ENCODE measurements at regions of chr4 and their contacts with region 1.

Region 1: GRCh38 chr4:99563310-99564186 is at the start of gene TRMT10A:
- DNase-seq: peak; percentile 87 to 93
- H3K4me3 ChIP-seq: peak within 1 kb of the TSS; percentile 69
- H3K27ac ChIP-seq: peak within 1 kb of the TSS; percentile 92
- H3K4me1 ChIP-seq: 0 out of 2 replicates have a peak, but pooled peaks cover 9% of the 10 kb centered on the region
- H3K27me3 ChIP-seq: no peaks in the 10 kb centered on the region
- CTCF ChIP-seq: no peak
- total RNA-seq, gene TRMT10A: 4.6 and 6.1 TPM in 2 replicates

Region 2: DNA sequence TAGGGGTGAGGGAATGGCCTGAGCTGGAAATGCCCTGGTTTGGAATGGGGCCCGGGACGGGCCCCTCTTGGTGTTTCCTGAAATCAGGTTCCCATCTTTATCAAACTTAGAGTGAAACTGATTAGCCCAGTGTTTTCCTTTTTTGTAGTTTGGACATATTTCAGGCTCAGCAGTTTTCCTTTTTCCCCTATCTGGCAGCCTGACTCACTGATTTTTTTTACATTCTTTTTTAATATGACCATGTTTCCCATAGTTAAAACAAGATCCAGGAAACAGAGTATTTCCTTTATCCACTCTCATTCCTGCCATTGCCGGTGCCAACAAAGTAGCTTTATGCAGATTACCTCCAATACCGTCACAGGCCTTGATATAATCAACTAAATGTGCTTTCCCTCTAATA is 73.3 kb before region 1 on chr4:
- CTCF ChIA-PET with region 1: no interaction called
- POLR2A ChIA-PET with region 1: no interaction called
- intact Hi-C with region 1: no loop called
- DNase-seq: no peak
- H3K4me3 ChIP-seq: no peak overlapping the region
- H3K27ac ChIP-seq: no peak overlapping the region
- H3K4me1 ChIP-seq: 0 out of 2 replicates have a peak, but pooled peaks cover 7% of the 10 kb centered on the region
- H3K27me3 ChIP-seq: no peaks in the 10 kb centered on the region
- CTCF ChIP-seq: no peak

Region 3: DNA sequence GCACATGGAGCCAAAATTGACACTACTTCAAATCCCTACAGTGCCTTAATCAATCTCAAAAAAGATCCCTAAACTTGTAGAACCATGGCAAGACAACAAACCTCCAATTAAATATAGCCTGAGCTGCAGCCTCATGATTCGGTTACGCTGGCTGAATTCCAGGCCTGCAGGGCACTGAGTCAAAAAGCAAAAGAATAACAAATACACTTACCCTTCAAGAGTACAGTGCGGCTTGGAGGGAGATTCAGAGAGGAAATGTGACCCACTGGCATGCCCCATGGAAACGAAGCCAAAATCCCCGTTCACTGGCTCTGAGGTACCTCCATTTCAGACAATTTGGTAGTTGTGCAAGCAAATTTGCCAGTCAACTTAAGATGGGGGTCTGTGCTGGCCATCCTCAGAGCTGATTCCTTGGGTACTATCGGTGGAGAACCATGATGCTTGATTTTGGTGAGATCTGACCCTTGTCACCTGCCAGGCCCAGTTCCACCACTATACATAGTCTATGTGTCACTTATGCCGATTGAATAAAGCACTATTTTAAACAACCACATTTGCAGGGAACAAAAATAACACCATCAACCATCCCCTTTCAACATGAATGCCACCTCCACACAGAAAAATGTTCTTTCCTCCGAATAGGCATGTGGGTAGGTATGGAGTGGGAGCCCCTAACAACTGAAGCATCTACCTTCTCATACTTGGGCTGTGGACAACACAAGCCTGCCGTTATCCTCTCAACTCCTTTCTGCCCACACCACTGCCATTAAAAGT is 91.9 kb after region 1 on chr4:
- CTCF ChIA-PET with region 1: no interaction called
- POLR2A ChIA-PET with region 1: no interaction called
- intact Hi-C with region 1: loop called (anchors 2 kb)
- DNase-seq: peak; percentile 64 to 77
- H3K4me3 ChIP-seq: no peak overlapping the region
- H3K27ac ChIP-seq: peak overlapping the region; percentile 38
- H3K4me1 ChIP-seq: peaks cover 42% of the 10 kb centered on the region
- H3K27me3 ChIP-seq: no peaks in the 10 kb centered on the region
- CTCF ChIP-seq: no peak

Region 4: DNA sequence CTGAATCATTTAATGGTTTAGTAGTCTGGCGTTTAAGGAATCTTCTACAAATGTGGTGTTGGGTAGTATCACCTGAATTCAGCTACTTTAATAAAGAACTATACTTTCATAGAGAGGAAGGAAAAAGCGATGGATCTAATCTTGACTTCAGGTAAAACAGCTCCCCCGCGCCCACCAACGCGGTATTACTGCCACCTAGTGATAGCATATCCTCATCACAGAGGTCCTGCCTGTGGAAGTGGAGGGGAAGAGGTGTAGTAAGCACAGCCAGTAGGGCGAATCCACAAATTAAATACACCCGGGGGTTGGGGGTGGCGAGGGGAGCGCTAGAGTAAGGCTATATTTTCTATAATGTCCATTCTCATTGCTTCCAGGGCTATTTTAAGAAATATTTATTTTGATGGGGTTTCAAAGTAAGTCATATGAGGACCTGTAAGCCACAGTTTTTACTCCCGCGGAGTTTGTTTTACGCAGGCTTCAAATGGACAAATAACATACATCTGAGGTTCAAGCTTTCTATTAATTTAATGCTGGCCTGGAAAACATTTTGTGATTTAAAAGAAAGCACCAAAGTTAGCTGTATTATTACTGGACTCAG is 244.8 kb after region 1 on chr4:
- CTCF ChIA-PET with region 1: interaction called, 4 read pairs
- POLR2A ChIA-PET with region 1: no interaction called
- intact Hi-C with region 1: loop called (anchors 1 kb)
- DNase-seq: peak; percentile 44 to 62
- H3K4me3 ChIP-seq: no peak overlapping the region
- H3K27ac ChIP-seq: no peak overlapping the region
- H3K4me1 ChIP-seq: no peaks in the 10 kb centered on the region
- H3K27me3 ChIP-seq: no peaks in the 10 kb centered on the region
- CTCF ChIP-seq: peak; percentile 88

Region 5: DNA sequence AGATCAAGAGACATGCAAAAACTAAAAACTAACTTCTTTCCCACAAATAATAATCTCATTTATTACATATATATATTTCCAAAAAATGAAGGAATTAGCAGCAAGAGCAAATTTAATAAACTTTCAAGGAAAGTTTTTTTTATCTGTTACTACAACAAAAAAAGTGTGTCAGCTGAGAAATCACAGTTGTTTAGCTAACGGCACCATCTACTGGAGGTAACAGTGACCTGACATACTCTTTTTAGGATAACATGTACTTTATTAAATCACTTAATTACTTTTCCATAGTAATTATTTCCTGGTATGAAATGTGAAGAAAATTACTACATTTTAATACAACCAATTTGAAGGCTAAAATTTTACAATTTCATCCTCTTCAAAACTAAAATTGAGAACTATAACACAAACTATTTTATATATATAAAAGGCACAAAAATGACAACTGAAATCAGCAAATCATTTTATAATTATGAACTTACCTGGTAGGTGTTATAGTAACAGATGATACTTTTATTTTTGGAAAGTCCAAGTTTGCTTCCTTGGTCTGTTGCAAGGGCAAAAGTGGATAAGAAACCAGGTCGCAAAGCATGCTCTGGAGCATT is 321.6 kb after region 1 on chr4:
- CTCF ChIA-PET with region 1: no interaction called
- POLR2A ChIA-PET with region 1: no interaction called
- intact Hi-C with region 1: loop called (anchors 2 kb)
- DNase-seq: no peak
- H3K4me3 ChIP-seq: no peak overlapping the region
- H3K27ac ChIP-seq: no peak overlapping the region
- H3K4me1 ChIP-seq: no peaks in the 10 kb centered on the region
- H3K27me3 ChIP-seq: no peaks in the 10 kb centered on the region
- CTCF ChIP-seq: peak; percentile 73